GM12878 (cell line): ENCODE measurements at regions of chr12 and their contacts with region 1.

Region 1: GRCh38 chr12:93243689-93244513 is 133.8 kb upstream of the NUDT4 start:
- DNase-seq: peak; percentile 75
- ATAC-seq: peak; percentile 52
- H3K4me3 ChIP-seq: peak overlapping the region; percentile 47
- H3K27ac ChIP-seq: peak overlapping the region; percentile 87
- H3K4me1 ChIP-seq: peaks cover 62% of the 10 kb centered on the region
- H3K27me3 ChIP-seq: no peaks in the 10 kb centered on the region
- CTCF ChIP-seq: no peak
- EP300 ChIP-seq: no peak
- POLR2A ChIP-seq: no peak
- RAD21 ChIP-seq: 0 out of 2 replicates have a peak, but pooled peaks have one; percentile 1

Region 2: DNA sequence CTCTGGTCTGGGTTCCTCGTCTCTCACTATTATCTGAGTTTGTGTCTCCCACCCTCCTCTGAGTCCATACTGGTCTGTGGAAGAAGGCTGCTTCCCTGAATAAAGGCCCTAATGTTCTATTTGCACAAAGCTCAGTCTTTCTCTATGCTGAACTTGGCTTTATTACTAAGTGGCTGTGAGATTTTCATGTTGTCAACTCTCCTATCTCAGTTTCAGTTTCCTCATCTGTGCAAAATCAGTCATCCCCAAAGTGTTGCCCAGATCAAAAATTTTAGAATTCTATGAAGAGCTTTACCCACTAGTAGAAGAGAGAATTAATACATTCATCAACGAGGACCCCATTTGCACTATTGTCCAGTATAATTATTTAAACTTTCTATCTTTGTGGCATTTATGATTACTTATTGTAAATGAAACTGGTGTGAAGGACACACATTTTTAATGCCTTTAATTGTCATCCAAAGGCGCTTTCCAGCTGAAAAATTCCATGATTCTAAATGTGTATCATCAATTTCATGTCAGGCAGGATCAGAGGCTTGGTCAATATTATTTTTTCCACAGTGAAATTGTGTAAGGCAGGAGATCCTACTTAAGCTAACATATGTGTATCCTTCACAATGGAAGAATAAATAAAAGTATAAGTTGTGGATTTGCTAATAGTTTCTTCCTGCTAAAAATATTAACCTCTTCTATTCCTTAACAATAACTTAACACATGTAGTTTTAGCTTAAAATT is 235.7 kb before region 1 on chr12:
- CTCF ChIA-PET with region 1: no interaction called
- POLR2A ChIA-PET with region 1: no interaction called
- RAD21 ChIA-PET with region 1: interaction called, 10 read pairs
- SMC1A ChIA-PET with region 1: interaction called, 18 read pairs
- in situ Hi-C with region 1: no loop called
- intact Hi-C with region 1: no loop called
- DNase-seq: no peak
- ATAC-seq: peak; percentile 92
- H3K4me3 ChIP-seq: no peak overlapping the region
- H3K27ac ChIP-seq: peak overlapping the region; percentile 45
- H3K4me1 ChIP-seq: peaks cover 36% of the 10 kb centered on the region
- H3K27me3 ChIP-seq: no peaks in the 10 kb centered on the region
- CTCF ChIP-seq: no peak
- EP300 ChIP-seq: no peak
- POLR2A ChIP-seq: no peak
- RAD21 ChIP-seq: no peak

Region 3: GRCh38 chr12:93146263-93146939 is 97.5 kb before region 1 on chr12:
- CTCF ChIA-PET with region 1: interaction called, 7 read pairs
- POLR2A ChIA-PET with region 1: no interaction called
- RAD21 ChIA-PET with region 1: interaction called, 12 read pairs
- SMC1A ChIA-PET with region 1: interaction called, 9 read pairs
- in situ Hi-C with region 1: no loop called
- intact Hi-C with region 1: no loop called
- DNase-seq: no peak
- ATAC-seq: no peak
- H3K4me3 ChIP-seq: no peak overlapping the region
- H3K27ac ChIP-seq: no peak overlapping the region
- H3K4me1 ChIP-seq: no peaks in the 10 kb centered on the region
- H3K27me3 ChIP-seq: no peaks in the 10 kb centered on the region
- CTCF ChIP-seq: no peak
- EP300 ChIP-seq: no peak
- POLR2A ChIP-seq: no peak
- RAD21 ChIP-seq: no peak

Region 4: DNA sequence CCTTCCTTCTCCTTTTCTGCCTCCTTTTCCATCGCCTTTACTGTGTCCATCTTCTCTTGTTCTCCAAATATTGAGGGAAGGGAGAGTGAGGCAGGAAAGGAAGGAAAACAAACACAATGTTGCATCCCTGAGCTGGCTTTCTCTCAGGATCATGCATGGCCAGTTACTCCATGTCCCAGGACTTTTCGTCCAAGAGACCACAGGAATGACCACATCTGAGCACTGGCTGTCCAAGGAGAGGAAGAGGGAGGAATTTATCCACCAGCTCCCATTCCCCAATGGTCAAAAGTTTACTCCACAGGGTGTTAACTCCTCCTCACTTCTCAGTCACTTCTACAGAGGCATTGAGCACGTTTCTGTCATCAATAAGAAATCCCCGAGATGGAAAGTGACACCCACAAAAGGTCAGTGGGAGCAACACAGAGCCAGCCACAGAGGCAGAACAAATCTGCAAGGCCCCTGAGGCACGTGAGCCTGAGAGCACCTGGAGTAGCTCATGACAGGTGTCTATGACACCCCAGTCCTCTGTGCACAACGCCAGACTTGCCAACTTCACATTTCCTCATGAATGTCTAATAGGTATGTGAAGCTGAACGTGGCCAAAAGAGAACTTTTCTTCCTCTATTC is 43.5 kb before region 1 on chr12:
- CTCF ChIA-PET with region 1: interaction called, 3 read pairs
- POLR2A ChIA-PET with region 1: interaction called, 4 read pairs
- RAD21 ChIA-PET with region 1: interaction called, 17 read pairs
- SMC1A ChIA-PET with region 1: interaction called, 10 read pairs
- in situ Hi-C with region 1: no loop called
- intact Hi-C with region 1: no loop called
- DNase-seq: peak; percentile 32
- ATAC-seq: peak; percentile 90
- H3K4me3 ChIP-seq: no peak overlapping the region
- H3K27ac ChIP-seq: no peak overlapping the region
- H3K4me1 ChIP-seq: peaks cover 14% of the 10 kb centered on the region
- H3K27me3 ChIP-seq: no peaks in the 10 kb centered on the region
- CTCF ChIP-seq: no peak
- EP300 ChIP-seq: 0 out of 4 replicates have a peak, but pooled peaks of 1 of the 2 experiments have one; percentile 19
- POLR2A ChIP-seq: no peak
- RAD21 ChIP-seq: no peak

Region 5: GRCh38 chr12:93273834-93274564 is 30.1 kb after region 1 on chr12:
- CTCF ChIA-PET with region 1: no interaction called
- POLR2A ChIA-PET with region 1: no interaction called
- RAD21 ChIA-PET with region 1: no interaction called
- SMC1A ChIA-PET with region 1: no interaction called
- in situ Hi-C with region 1: no loop called
- intact Hi-C with region 1: no loop called
- DNase-seq: no peak
- ATAC-seq: no peak
- H3K4me3 ChIP-seq: no peak overlapping the region
- H3K27ac ChIP-seq: no peak overlapping the region
- H3K4me1 ChIP-seq: no peaks in the 10 kb centered on the region
- H3K27me3 ChIP-seq: no peaks in the 10 kb centered on the region
- CTCF ChIP-seq: no peak
- EP300 ChIP-seq: no peak
- POLR2A ChIP-seq: no peak
- RAD21 ChIP-seq: no peak

Region 6: DNA sequence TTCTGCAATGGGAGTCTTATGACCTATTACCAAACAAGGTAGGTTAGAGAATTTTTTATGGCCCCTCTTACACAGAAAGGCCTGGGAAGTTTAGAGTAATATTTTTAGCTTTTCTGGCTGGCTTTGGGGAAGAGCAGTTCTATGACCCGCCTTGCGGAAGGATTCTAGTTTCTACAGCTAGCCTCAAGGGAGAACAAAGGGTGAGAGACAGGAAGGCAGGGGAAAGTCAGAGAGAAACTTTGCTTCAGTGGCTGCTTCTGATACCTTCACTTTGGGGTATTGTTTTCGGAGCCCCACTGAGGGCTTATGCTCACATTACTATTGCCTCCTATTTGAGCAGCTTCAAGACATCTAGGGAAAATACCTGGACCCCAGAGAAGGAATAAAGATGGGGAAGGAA is 53.1 kb after region 1 on chr12:
- CTCF ChIA-PET with region 1: interaction called, 16 read pairs
- POLR2A ChIA-PET with region 1: no interaction called
- RAD21 ChIA-PET with region 1: interaction called, 19 read pairs
- SMC1A ChIA-PET with region 1: interaction called, 38 read pairs
- in situ Hi-C with region 1: no loop called
- intact Hi-C with region 1: no loop called
- DNase-seq: peak; percentile 75
- ATAC-seq: peak; percentile 95
- H3K4me3 ChIP-seq: peak overlapping the region; percentile 25
- H3K27ac ChIP-seq: peak overlapping the region; percentile 73
- H3K4me1 ChIP-seq: peaks cover 17% of the 10 kb centered on the region
- H3K27me3 ChIP-seq: no peaks in the 10 kb centered on the region
- CTCF ChIP-seq: no peak
- EP300 ChIP-seq: no peak
- POLR2A ChIP-seq: no peak
- RAD21 ChIP-seq: 0 out of 2 replicates have a peak, but pooled peaks have one; percentile 13

Region 7: GRCh38 chr12:93387780-93388179 is 143.9 kb after region 1 on chr12:
- CTCF ChIA-PET with region 1: interaction called, 42 read pairs
- POLR2A ChIA-PET with region 1: interaction called, 15 read pairs
- RAD21 ChIA-PET with region 1: interaction called, 14 read pairs
- SMC1A ChIA-PET with region 1: interaction called, 9 read pairs
- in situ Hi-C with region 1: no loop called
- intact Hi-C with region 1: no loop called
- DNase-seq: no peak
- ATAC-seq: peak; percentile 76
- H3K4me3 ChIP-seq: peak overlapping the region; percentile 6
- H3K27ac ChIP-seq: peak overlapping the region; percentile 35; the same call in 1 of the 2 replicates
- H3K4me1 ChIP-seq: peaks cover 27% of the 10 kb centered on the region
- H3K27me3 ChIP-seq: no peaks in the 10 kb centered on the region
- CTCF ChIP-seq: no peak
- EP300 ChIP-seq: no peak
- POLR2A ChIP-seq: no peak
- RAD21 ChIP-seq: no peak